Ovary (tissue), 10 donors: ENCODE measurements at regions of chr2 and their contacts with region 1.

Region 1: GRCh38 chr2:235605312-235606003 is 111.6 kb downstream of the AGAP1 start:
- DNase-seq: peak; percentile 74 to 89 (median 80)
- H3K4me3 ChIP-seq: no peak overlapping the region
- H3K27ac ChIP-seq: no peak overlapping the region
- H3K4me1 ChIP-seq: no peaks in the 10 kb centered on the region
- H3K27me3 ChIP-seq: no peaks in the 10 kb centered on the region
- CTCF ChIP-seq: no peak
- EP300 ChIP-seq: no peak
- POLR2A ChIP-seq: no peak

Region 2: DNA sequence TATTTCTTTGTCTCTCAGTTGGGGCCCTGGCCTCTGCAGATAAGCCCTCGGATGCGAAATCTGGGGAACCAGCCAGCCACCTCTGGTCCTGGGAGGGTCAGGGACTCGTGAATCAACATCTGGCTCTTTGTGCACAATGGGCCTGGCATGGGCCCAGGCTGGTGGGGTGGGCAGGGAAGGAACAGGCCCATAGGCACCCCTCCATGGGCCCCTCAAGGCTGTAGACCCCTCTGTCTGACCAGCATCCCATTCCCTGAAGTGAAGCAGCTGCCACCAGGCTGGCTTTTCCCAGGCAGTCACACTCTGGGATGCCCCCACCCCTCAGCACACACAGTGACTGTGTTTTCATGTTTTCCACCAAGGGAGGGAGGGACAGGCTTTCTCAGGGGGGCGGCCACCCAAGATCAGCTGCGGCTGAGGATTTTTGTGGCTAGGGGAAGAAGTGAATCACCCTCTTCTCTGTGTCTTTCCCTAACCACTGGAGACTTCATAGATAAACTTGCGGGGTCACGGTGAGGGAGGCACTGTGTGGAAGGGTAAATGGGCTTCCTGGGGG is 54.4 kb after region 1 on chr2:
- intact Hi-C with region 1: loop called in 2 of 4 experiments (anchors 5 to 10 kb)
- DNase-seq: peak; percentile 61 to 77 (median 71)
- H3K4me3 ChIP-seq: no peak overlapping the region
- H3K27ac ChIP-seq: peak overlapping the region; percentile 52 to 65
- H3K4me1 ChIP-seq: peaks cover 27% of the 10 kb centered on the region
- H3K27me3 ChIP-seq: no peaks in the 10 kb centered on the region
- CTCF ChIP-seq: no peak
- EP300 ChIP-seq: no peak
- POLR2A ChIP-seq: no peak